B cell (primary cell): ENCODE measurements at regions of chr3 and their contacts with region 1.

Region 1: DNA sequence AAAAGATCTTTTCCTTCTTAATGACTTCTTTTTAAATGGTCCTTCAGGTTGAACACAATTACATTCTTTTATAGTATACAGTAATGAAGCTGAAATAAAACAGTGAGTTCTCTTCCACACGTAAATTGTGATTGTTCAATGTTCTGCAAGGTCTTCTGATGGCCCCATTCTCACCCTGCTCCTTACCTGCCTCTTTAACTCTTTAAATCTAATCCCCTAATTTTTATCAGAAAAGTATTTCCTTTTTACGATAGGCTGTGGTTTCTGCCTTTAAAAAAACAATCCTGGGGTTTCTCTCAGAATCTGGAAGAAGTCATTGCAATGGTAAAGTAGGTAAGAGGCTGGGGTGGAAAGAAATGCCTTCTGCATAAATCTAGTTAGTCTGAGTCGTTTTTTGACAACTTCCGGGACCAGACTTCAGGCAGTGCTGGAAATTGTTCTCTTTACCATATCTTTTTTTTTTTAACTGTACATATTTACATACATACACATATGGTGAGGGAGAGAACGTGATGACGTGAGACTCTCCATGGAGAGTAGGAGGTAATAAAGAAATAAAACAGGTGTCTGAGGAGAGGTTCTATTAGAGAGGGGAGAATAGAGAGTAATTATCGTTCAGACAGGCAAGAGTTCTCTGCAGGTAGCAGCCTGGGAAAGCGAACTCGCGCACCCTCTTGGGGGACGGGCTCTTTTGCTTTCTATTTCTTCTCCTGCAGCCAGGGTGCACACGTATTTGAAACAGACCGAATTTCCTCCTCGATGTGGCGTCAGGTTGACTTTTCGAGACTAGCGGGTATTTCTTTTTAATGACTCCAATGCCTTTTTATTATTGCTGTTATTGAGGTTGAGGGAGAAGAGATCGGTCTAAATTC is at the start of gene SIDT1:
- DNase-seq: peak; percentile 89
- ATAC-seq: peak; percentile 81
- H3K4me3 ChIP-seq: peak within 1 kb of the TSS; percentile 86 to 96 (median 95)
- H3K4me3 Mint-ChIP-seq: peak within 1 kb of the TSS; percentile 93
- H3K27ac ChIP-seq: peak within 1 kb of the TSS; percentile 86 to 87
- H3K27ac Mint-ChIP-seq: peak within 1 kb of the TSS; percentile 96
- H3K4me1 ChIP-seq: peaks cover 35 to 36% of the 10 kb centered on the region in 2 donors
- H3K4me1 Mint-ChIP-seq: peaks cover 46% of the 10 kb centered on the region
- H3K27me3 ChIP-seq: no peaks in the 10 kb centered on the region
- H3K27me3 Mint-ChIP-seq: peaks cover 6% of the 10 kb centered on the region
- CTCF ChIP-seq: no peak
- total RNA-seq, gene SIDT1: 75.4 and 84.4 TPM in 2 replicates

Region 2: GRCh38 chr3:112561731-112562688 is 970.1 kb before region 1 on chr3 and contains the starts of genes ATG3 and SLC35A5:
- CTCF ChIA-PET with region 1: no interaction called
- POLR2A ChIA-PET with region 1: no interaction called
- intact Hi-C with region 1: loop called (anchors 10 kb)
- DNase-seq: peak; percentile 99
- ATAC-seq: peak; percentile 79
- H3K4me3 ChIP-seq: peak within 1 kb of the TSS; percentile 75 to 99 (median 94)
- H3K4me3 Mint-ChIP-seq: peak within 1 kb of the TSS; percentile 99
- H3K27ac ChIP-seq: peak within 1 kb of the TSS; percentile 93 to 96
- H3K27ac Mint-ChIP-seq: peak within 1 kb of the TSS; percentile 100
- H3K4me1 ChIP-seq: peaks cover 23 to 34% of the 10 kb centered on the region in 2 donors
- H3K4me1 Mint-ChIP-seq: peaks cover 50% of the 10 kb centered on the region
- H3K27me3 ChIP-seq: no peaks in the 10 kb centered on the region
- H3K27me3 Mint-ChIP-seq: no peaks in the 10 kb centered on the region
- CTCF ChIP-seq: no peak
- total RNA-seq, gene ATG3: 48.8 and 54.9 TPM in 2 replicates
- total RNA-seq, gene SLC35A5: 32.1 and 34.9 TPM in 2 replicates

Region 3: GRCh38 chr3:113514265-113514769 is 17.7 kb before region 1 on chr3:
- CTCF ChIA-PET with region 1: interaction called, 4 read pairs
- POLR2A ChIA-PET with region 1: interaction called, 22 read pairs
- intact Hi-C with region 1: loop called (anchors 1 kb)
- DNase-seq: no peak
- ATAC-seq: no peak
- H3K4me3 ChIP-seq: peak overlapping the region; percentile 46 to 98 (median 92)
- H3K4me3 Mint-ChIP-seq: no peak overlapping the region
- H3K27ac ChIP-seq: peak overlapping the region; percentile 77 to 91
- H3K27ac Mint-ChIP-seq: no peak overlapping the region
- H3K4me1 ChIP-seq: peaks cover 12 to 17% of the 10 kb centered on the region in 2 donors
- H3K4me1 Mint-ChIP-seq: peaks cover 14% of the 10 kb centered on the region
- H3K27me3 ChIP-seq: peaks cover 0 to 14% (median 4%) of the 10 kb centered on the region in 4 experiments
- H3K27me3 Mint-ChIP-seq: peaks cover 23% of the 10 kb centered on the region
- CTCF ChIP-seq: no peak

Region 4: DNA sequence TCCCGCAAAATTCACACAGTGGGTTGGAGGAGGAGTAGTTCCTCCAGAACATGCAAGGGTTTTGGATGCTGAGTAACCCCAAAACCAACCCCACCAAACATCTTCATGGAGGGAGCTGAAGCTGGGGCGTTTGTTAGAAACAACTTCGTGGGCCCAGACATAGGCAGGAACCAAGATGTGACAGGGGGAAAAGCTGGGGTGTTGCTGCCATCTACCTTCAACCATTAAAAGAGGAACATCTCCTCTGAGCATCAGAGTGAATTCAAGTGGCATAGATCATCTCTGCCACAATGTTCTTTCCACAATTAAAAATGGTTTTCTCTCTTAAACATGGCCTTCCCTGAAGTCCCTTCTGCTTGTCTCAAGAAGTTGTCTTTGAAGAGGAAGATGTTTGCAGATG is 20.8 kb after region 1 on chr3:
- CTCF ChIA-PET with region 1: interaction called, 24 read pairs
- POLR2A ChIA-PET with region 1: no interaction called
- intact Hi-C with region 1: no loop called
- DNase-seq: peak; percentile 68
- ATAC-seq: peak; percentile 62
- H3K4me3 ChIP-seq: no peak overlapping the region
- H3K4me3 Mint-ChIP-seq: no peak overlapping the region
- H3K27ac ChIP-seq: peak overlapping the region in 1 of 2 donors; percentile 42
- H3K27ac Mint-ChIP-seq: peak overlapping the region; percentile 22
- H3K4me1 ChIP-seq: peaks cover 4 to 6% of the 10 kb centered on the region in 2 donors
- H3K4me1 Mint-ChIP-seq: peaks cover 21% of the 10 kb centered on the region
- H3K27me3 ChIP-seq: no peaks in the 10 kb centered on the region
- H3K27me3 Mint-ChIP-seq: no peaks in the 10 kb centered on the region
- CTCF ChIP-seq: peak; percentile 64

Region 5: DNA sequence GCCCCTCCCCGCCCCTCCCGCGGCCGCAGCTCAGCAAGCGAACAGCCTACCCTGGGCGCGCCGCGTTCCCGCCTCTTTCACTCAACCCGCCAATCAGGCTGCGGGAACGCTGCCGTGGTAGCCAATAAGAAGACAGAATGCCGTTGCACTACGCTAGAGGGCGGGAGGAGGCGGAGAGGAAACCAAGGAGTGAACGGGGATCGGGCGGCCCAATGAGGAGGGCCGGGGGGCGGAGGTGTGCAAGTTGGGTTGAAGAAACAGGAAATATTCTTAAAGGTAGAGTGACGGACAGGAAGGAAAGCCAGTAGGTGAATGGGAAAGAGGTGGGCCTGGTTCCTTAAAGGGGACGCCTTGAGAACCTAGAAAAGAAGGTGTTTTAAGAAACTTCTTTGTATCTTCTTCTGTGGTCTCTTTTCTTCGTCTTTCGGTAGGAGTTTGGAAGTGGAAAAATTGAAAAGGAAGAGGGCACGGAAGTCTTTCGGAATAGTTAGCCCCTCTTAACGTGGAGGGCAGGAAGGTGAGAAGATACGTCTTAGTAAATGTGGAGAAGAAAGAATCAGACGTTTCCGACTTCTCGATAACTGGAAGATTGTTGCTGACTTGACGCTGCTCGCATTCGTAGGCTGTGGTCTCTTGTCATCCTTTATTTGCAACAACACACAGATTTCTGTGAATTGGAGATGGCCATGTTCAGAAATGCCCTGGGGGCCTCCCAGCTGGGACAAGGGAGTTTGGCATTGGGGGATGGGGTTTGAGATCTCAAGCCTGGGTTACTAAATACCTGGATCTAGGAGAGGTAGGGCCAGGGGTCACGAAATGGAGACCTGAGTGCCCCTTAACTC is 164.8 kb after region 1 on chr3:
- CTCF ChIA-PET with region 1: no interaction called
- POLR2A ChIA-PET with region 1: no interaction called
- intact Hi-C with region 1: loop called (anchors 1 kb)
- DNase-seq: peak; percentile 100
- ATAC-seq: peak; percentile 87
- H3K4me3 ChIP-seq: peak overlapping the region; percentile 73 to 100 (median 90)
- H3K4me3 Mint-ChIP-seq: no peak overlapping the region
- H3K27ac ChIP-seq: peak overlapping the region; percentile 81 to 90
- H3K27ac Mint-ChIP-seq: no peak overlapping the region
- H3K4me1 ChIP-seq: peaks cover 39 to 40% of the 10 kb centered on the region in 2 donors
- H3K4me1 Mint-ChIP-seq: peaks cover 27% of the 10 kb centered on the region
- H3K27me3 ChIP-seq: no peaks in the 10 kb centered on the region
- H3K27me3 Mint-ChIP-seq: no peaks in the 10 kb centered on the region
- CTCF ChIP-seq: no peak